Calu3 (cell line): ENCODE measurements at regions of chr3 and their contacts with region 1.

Region 1: DNA sequence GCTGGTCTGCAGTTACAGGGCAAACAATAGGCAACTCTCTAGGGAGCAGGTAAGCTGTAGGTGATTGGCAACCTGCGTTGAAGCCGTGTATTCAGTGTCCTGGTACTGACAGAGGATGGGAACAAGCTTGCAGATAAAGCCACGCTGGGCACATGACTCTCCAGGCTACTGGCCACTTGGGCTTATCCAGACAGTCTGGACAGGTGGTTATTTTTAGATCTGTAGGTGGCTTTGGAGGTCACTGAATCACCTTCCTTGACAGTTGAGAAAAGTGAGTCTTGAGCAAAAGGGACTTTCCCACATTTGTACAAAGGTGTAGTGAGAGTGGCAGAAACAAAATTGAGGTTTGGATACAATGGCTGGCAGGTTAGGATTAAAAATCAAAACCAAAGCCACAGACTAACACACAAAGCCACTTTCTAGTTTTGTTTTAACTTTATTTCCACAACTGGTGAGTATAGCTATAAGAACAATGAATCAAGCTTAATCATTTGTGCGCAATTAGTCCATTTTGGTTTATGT is 22.3 kb upstream of the IL1RAP start:
- DNase-seq: peak; percentile 54
- H3K4me3 Mint-ChIP-seq: peak overlapping the region; percentile 8
- H3K27ac Mint-ChIP-seq: peak overlapping the region; percentile 12
- H3K4me1 Mint-ChIP-seq: peaks cover 56% of the 10 kb centered on the region
- H3K27me3 Mint-ChIP-seq: no peaks in the 10 kb centered on the region
- CTCF ChIP-seq: no peak

Region 2: DNA sequence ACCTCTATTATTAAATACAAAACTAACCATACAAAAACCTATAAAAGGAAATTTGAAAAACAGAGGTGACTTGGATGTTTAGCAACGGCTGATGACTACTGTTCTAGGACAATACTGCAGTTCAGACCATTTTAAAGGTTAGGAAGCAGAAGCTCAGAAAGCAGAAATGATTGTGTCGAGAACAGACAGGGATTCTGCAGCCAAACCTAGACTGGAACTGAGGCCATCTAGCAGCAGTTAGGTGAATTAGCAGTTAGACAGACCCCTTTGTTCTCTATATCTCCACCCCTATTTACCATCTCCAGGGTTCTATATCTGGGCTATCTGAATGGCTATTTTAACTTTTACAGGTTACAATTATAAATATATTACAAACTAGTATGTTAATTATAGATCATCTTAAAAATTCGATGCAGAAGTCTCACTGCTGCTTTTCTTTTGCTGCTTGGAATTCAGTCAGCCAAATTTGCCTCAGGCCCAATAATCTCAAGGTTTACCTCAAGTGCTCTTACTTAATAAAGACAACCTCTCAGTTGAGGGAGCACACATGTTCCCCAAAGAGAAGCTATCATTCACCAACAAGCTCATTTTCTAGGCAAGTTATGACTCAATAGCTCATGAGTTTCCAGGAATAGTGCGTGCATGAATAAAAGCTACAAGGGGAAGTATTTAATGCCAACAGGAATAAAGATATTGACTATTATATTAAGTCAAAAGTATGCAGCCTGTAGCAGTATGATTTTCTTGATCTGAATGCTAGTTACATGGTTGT is 12.9 kb after region 1 on chr3:
- CTCF ChIA-PET with region 1: interaction called, 10 read pairs
- intact Hi-C with region 1: no loop called
- DNase-seq: no peak
- H3K4me3 Mint-ChIP-seq: peak overlapping the region; percentile 6
- H3K27ac Mint-ChIP-seq: no peak overlapping the region
- H3K4me1 Mint-ChIP-seq: peaks cover 27% of the 10 kb centered on the region
- H3K27me3 Mint-ChIP-seq: no peaks in the 10 kb centered on the region
- CTCF ChIP-seq: peak; percentile 18